ENCODE measurements at regions of chr20 and their contacts with region 1.

Region 1: GRCh38 chr20:25042531-25043498 is 15.1 kb downstream of the ACSS1 start:
- DNase-seq: peak; percentile 85
- ATAC-seq: peak; percentile 90
- H3K4me3 ChIP-seq: peak overlapping the region in 4 of 5 experiments; percentile 5 to 25 (median 18)
- H3K4me3 Mint-ChIP-seq: peak overlapping the region; percentile 72
- H3K27ac ChIP-seq: peak overlapping the region; percentile 92 to 93
- H3K27ac Mint-ChIP-seq: peak overlapping the region; percentile 90
- H3K4me1 ChIP-seq: peaks cover 58 to 62% of the 10 kb centered on the region in 2 donors
- H3K4me1 Mint-ChIP-seq: peaks cover 63% of the 10 kb centered on the region
- H3K27me3 ChIP-seq: no peaks in the 10 kb centered on the region
- H3K27me3 Mint-ChIP-seq: no peaks in the 10 kb centered on the region
- CTCF ChIP-seq: no peak

Region 2: DNA sequence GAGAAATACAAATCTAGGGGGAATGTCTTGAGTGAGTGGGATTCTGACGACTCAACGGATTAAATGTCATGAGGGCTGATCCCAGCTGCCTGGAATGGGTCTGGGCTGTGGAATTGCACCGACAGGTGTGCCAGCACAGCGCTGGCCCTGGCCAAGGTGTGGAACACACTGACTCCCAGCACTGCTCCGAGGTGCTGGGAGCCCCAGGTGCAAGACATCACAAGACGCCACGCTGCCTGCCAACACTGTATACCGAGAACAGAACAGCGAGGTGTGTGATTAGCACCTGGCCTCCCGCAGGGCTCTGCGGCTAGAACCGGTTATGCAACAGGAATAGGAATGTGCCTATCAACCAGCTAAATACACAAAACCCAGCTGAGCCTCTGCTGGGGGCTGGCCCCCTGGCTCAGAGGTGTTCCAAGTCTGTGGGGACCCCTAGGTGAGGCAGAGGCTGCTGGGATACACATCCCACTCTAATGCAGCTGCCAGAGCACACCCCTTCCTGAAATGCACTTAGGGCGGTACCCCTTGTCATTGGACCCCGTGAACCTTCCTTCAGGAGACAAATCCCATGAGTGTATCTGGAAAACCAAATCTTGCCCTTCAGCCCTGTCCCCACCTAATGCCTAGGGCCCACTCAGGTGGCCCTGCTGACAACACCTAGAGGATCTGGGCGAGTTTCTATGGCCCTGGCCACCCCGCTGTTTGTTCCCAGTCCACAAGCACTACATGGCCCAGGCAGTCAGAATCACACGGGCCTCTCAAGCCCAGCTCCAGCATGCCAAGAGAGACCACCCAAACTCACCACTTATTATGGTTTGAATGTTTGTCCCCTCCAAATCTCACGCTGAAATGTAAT is 25.3 kb before region 1 on chr20:
- CTCF ChIA-PET with region 1: no interaction called
- POLR2A ChIA-PET with region 1: no interaction called
- intact Hi-C with region 1: no loop called
- DNase-seq: no peak
- ATAC-seq: no peak
- H3K4me3 ChIP-seq: no peak overlapping the region
- H3K4me3 Mint-ChIP-seq: no peak overlapping the region
- H3K27ac ChIP-seq: no peak overlapping the region
- H3K27ac Mint-ChIP-seq: no peak overlapping the region
- H3K4me1 ChIP-seq: no peaks in the 10 kb centered on the region
- H3K4me1 Mint-ChIP-seq: peaks cover 8% of the 10 kb centered on the region
- H3K27me3 ChIP-seq: no peaks in the 10 kb centered on the region
- H3K27me3 Mint-ChIP-seq: no peaks in the 10 kb centered on the region
- CTCF ChIP-seq: no peak

Region 3: DNA sequence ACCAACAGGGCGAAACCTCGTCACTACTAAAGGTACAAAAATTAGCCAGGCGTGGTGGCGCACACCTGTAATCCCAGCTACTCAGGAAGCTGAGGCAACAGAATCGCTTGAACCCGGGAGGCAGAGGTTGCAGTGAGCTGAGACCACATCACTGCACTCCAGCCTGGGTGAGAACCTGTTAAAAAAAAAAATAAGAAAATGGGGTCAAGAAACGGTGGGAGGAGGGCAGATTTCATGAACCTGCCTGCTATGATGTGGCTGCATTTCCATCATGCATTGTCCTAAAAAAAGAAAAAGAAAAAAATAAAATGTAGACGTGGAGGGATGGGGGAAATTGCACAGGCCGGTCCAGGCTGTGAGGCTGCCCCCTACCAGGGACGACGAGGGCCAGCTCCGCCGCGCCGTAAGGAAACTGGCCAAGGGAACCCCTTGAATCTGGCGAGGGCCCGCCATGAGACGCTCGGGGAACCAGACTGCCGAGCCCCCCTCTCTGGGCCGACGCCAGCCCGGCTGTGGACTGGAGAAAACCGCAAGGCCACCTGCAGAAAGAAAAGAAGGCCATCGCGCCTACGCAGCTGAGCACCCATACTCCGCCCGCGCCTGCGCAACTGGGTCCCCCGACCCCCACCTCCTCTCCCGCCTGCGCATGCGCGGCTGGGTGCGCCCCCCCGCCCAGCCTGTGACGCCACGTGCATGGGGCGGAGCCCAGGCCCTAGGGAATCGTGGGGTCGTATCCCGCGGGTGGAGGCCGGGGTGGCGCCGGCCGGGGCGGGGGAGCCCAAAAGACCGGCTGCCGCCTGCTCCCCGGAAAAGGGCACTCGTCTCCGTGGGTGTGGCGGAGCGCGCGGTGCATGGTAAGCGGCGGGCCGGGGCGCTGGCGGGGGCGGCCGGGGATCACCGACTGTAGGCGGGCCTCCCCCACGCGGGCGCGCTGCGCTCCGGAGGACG is 152.5 kb after region 1 on chr20 and contains the start of gene ENTPD6:
- CTCF ChIA-PET with region 1: no interaction called
- POLR2A ChIA-PET with region 1: no interaction called
- intact Hi-C with region 1: loop called (anchors 5 kb)
- DNase-seq: peak; percentile 95
- ATAC-seq: peak; percentile 85
- H3K4me3 ChIP-seq: peak within 1 kb of the TSS; percentile 55 to 91 (median 88)
- H3K4me3 Mint-ChIP-seq: peak within 1 kb of the TSS; percentile 94
- H3K27ac ChIP-seq: peak within 1 kb of the TSS; percentile 63 to 86
- H3K27ac Mint-ChIP-seq: peak within 1 kb of the TSS; percentile 92
- H3K4me1 ChIP-seq: peaks cover 15 to 24% of the 10 kb centered on the region in 2 donors
- H3K4me1 Mint-ChIP-seq: peaks cover 37% of the 10 kb centered on the region
- H3K27me3 ChIP-seq: no peaks in the 10 kb centered on the region
- H3K27me3 Mint-ChIP-seq: peaks cover 1% of the 10 kb centered on the region
- CTCF ChIP-seq: no peak
- total RNA-seq, gene ENTPD6: 64.4 and 71.3 TPM in 2 replicates